CD14-positive monocyte (primary cell): ENCODE measurements at regions of chr1 and their contacts with region 1.

Region 1: DNA sequence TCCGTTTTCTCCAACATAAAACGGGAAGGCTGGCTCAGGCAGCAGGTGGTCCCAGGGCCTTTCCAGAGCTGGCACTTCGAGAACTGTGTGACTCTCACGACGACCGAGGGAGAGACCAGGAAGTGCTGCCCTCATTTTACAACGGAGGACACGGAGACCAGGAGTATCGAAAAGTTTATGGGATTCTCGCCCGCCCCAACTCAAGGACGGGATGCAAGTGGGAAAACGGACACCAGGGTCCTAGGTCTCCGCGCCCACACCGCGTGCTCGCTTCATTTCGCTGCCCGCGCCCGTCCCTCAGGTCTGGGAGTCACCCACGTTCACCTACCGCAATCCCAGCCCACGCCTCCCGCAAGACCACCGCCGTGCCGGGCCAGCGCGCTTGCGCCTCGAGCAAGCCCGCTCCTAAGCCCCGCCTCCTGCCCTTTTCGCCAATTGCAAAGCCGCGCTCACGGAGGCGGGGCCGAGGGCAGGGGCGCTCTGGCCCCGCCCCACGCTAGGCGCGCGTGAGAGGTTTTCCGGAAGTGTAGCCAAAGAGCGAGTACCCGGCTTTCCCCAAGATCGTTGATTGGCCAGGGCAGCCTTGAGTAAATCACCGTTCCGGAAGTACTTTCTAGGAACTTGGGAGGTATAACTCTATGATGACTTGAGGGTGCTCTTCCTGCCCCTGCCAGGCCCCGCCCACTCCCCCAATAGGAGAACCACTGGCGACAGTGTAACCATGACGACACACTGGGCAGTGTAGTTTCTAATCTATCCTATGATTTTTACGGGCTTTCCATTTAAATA is at the start of gene PARS2:
- DNase-seq: peak; percentile 99
- H3K4me3 ChIP-seq: peak within 1 kb of the TSS; percentile 90 to 96 (median 91)
- H3K4me3 Mint-ChIP-seq: peak within 1 kb of the TSS; percentile 90 to 96
- H3K27ac ChIP-seq: peak within 1 kb of the TSS in 1 of 2 donors; percentile 88
- H3K27ac Mint-ChIP-seq: peak within 1 kb of the TSS; percentile 80 to 94 (median 90)
- H3K4me1 ChIP-seq: peaks cover 10 to 17% of the 10 kb centered on the region in 2 donors
- H3K4me1 Mint-ChIP-seq: peaks cover 19% of the 10 kb centered on the region
- H3K27me3 ChIP-seq: no peaks in the 10 kb centered on the region
- H3K27me3 Mint-ChIP-seq: peaks cover 0 to 1% (median 0%) of the 10 kb centered on the region in 3 donors
- CTCF ChIP-seq: no peak
- polyA plus RNA-seq, gene PARS2: 0.73 to 1.2 (median 0.92) TPM

Region 2: DNA sequence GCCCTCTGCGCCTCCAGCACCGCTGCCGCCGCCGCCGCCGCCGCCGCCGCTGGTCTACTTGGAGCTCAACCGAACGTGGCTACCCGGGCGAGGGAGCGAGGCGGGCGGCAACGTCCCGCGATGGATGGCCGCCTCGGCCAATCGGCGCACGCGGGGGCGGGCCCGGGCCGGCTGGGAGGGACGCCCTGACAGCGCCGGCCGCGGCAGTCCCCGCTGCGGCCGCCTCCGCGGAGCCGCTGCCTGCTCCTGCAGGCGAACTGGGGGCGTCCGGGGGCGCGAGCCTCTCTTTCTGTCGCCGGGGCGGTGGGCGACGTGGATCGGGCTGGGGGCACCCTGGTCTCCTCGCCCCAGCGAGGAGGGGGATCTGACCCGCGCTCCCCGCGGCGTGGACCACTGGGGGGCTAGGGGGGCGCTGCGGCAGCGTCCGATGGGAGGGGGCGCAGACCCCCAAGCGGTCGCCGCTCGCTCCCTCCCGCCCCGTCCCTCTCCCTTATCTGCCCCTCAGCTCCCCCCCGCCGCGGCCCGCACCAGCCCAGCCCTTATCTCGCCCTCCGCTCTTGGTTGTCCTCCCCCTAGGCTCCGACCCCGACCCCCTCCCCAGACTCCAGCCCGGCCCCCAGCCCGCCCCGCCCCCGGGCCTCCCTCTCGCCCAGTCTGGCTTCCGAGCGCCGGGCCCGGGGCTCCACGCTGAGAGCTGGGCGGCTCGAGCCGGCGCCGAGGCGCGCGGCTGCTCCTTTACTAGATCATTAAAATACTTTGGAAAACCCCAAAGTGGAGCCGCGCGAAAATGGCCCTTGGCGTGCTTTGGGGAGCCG is 357.8 kb before region 1 on chr1 and contains the start of gene SSBP3:
- intact Hi-C with region 1: loop called (anchors 10 kb)
- DNase-seq: peak; percentile 83 to 88 (median 85)
- H3K4me3 ChIP-seq: peak within 1 kb of the TSS; percentile 61 to 97 (median 96)
- H3K4me3 Mint-ChIP-seq: peak within 1 kb of the TSS; percentile 86 to 92
- H3K27ac ChIP-seq: peak within 1 kb of the TSS; percentile 57 to 92
- H3K27ac Mint-ChIP-seq: peak within 1 kb of the TSS; percentile 87 to 93 (median 90)
- H3K4me1 ChIP-seq: peaks cover 32 to 54% of the 10 kb centered on the region in 2 donors
- H3K4me1 Mint-ChIP-seq: peaks cover 51% of the 10 kb centered on the region
- H3K27me3 ChIP-seq: peaks cover 0 to 8% of the 10 kb centered on the region in 2 donors
- H3K27me3 Mint-ChIP-seq: peaks cover 8 to 13% (median 11%) of the 10 kb centered on the region in 3 donors
- CTCF ChIP-seq: peak; percentile 7
- polyA plus RNA-seq, gene SSBP3: 4.1 to 30.7 (median 4.3) TPM

Region 3: DNA sequence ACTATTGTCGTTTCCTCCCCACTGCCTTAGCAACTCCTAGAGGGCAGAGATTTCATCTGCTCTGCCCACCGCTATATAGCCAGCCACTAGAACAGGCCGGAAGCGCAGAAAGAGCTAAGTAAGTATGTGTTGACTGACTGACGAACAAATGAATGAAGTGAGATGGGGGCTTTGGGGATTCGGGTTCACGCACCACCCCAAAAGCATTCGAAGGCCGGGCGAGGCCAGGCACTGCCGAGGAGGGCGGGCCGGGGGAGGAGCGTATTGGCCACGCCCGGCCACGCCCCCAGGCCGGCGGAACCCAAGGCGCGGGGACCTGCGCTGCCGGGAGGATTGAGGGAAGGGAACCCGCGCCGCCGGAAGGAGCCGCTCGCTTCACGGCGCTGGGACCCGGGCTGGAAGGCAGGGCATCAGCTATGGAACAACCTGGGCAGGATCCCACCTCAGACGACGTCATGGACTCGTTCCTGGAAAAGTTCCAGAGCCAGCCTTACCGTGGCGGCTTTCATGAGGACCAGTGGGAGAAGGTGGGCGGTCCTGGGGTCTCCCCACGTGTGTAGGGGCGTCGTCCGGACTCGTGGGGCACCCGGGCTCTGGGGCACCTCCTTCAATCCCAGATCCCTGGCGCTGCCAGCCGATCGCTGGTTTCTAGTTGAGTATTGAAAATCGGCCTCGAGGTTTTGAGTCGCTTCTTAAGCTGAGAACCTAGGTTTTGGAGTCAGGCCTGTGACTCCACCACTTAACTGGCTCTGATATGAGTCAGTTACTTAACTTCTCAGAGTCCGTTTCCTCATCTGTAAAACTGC is 48.6 kb before region 1 on chr1 and contains the start of gene TTC4:
- intact Hi-C with region 1: loop called (anchors 2 to 5 kb)
- DNase-seq: peak; percentile 74 to 78 (median 76)
- H3K4me3 ChIP-seq: peak within 1 kb of the TSS; percentile 72 to 92 (median 74)
- H3K4me3 Mint-ChIP-seq: peak within 1 kb of the TSS; percentile 91 to 94
- H3K27ac ChIP-seq: peak within 1 kb of the TSS; percentile 46 to 87
- H3K27ac Mint-ChIP-seq: peak within 1 kb of the TSS; percentile 86 to 96 (median 92)
- H3K4me1 ChIP-seq: peaks cover 15 to 18% of the 10 kb centered on the region in 2 donors
- H3K4me1 Mint-ChIP-seq: peaks cover 19% of the 10 kb centered on the region
- H3K27me3 ChIP-seq: no peaks in the 10 kb centered on the region
- H3K27me3 Mint-ChIP-seq: peaks cover 0 to 2% (median 2%) of the 10 kb centered on the region in 3 donors
- CTCF ChIP-seq: no peak
- polyA plus RNA-seq, gene TTC4: 9.2 to 13.3 (median 12.4) TPM